PC-9 (cell line): ENCODE measurements at regions of chr9 and their contacts with region 1.

Region 1: DNA sequence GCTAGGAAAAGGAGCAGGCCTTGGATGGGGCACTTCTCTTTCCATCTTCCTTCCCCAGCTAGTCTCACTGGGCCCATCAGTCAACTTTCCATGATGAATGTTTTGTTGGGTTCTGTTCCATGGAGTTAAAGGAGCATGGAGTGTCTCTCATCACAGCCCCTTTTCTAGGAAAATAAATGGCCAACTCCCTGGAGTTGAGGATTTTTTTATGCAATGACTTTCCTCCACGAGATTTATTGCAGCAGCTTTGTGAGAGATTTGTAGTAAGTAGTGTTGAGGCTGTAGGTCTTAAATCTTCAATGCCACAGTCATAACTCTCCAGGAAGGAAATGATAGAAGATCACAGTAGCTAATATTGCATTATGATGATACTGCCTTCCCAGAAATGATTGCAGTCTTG is 45.6 kb upstream of the SLC44A1 start:
- DNase-seq: no peak
- H3K4me3 ChIP-seq: no peak overlapping the region
- H3K27ac ChIP-seq: no peak overlapping the region
- H3K4me1 ChIP-seq: no peaks in the 10 kb centered on the region
- H3K27me3 ChIP-seq: no peaks in the 10 kb centered on the region
- CTCF ChIP-seq: no peak

Region 2: GRCh38 chr9:104986096-104986495 is 212.8 kb before region 1 on chr9:
- CTCF ChIA-PET with region 1: no interaction called
- POLR2A ChIA-PET with region 1: interaction called, 12 read pairs
- intact Hi-C with region 1: no loop called
- DNase-seq: no peak
- H3K4me3 ChIP-seq: no peak overlapping the region
- H3K27ac ChIP-seq: no peak overlapping the region
- H3K4me1 ChIP-seq: peaks cover 25% of the 10 kb centered on the region
- H3K27me3 ChIP-seq: no peaks in the 10 kb centered on the region
- CTCF ChIP-seq: no peak

Region 3: DNA sequence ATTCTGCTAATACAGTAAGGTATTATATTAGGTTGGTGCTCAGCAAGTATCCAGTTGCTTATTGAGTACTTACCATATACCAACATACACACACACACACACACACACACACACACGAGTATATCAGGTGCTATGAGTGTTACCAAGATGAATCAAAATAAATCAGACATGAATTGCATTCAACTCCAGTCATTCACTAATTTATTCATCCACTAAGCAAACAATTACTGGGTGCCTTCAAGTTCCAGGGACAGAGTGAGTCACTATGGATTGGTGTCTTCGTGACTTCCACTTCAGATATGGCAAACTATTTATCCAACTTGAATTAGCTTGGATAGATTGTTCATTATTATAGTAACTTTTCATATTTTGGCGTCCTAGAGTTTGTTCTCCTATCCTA is 95.1 kb before region 1 on chr9:
- CTCF ChIA-PET with region 1: no interaction called
- POLR2A ChIA-PET with region 1: no interaction called
- intact Hi-C with region 1: no loop called
- DNase-seq: peak in 1 of 2 experiments; percentile 86
- H3K4me3 ChIP-seq: no peak overlapping the region
- H3K27ac ChIP-seq: peak overlapping the region; percentile 34; the same call in 1 of the 2 replicates
- H3K4me1 ChIP-seq: peaks cover 12% of the 10 kb centered on the region
- H3K27me3 ChIP-seq: no peaks in the 10 kb centered on the region
- CTCF ChIP-seq: no peak

Region 4: DNA sequence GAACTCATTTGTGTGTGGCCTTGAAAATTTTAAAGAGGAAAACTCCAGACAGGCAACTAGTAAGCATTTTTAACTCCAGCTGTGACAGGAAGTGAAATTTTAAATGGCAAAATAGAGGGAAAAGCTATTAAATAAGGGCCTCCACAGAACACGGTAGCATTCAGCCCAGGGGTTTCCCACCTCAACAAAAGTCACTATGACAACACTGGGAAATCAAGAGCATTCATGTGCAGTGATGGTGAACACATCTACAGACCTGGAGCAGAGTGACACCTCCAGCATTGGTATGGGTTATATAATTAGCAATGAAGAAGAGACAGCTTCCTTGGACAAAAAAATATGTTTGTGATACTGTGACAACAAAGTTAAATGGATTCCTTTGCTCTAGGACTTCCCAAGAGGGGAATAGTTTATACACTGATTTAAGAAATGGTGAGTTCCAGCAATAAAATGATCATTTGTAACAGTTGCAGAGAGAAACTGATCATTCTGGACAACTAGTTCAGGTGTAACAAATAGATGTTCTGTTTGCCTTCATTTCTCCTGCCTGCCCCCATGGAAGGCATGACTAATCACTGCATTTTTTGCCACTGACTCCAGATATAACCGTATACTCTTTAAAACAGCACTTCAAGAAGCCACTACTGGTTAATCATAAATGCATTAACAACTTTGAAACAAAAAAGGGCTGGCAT is 47.7 kb before region 1 on chr9:
- CTCF ChIA-PET with region 1: no interaction called
- POLR2A ChIA-PET with region 1: no interaction called
- intact Hi-C with region 1: no loop called
- DNase-seq: peak; percentile 10 to 60
- H3K4me3 ChIP-seq: no peak overlapping the region
- H3K27ac ChIP-seq: peak overlapping the region; percentile 33
- H3K4me1 ChIP-seq: peaks cover 38% of the 10 kb centered on the region
- H3K27me3 ChIP-seq: no peaks in the 10 kb centered on the region
- CTCF ChIP-seq: no peak